AG04450 (cell line): ENCODE measurements at regions of chr2 and their contacts with region 1.

Region 1: GRCh38 chr2:101387151-101387807 is at the start of gene CREG2:
- DNase-seq: no peak
- H3K4me3 ChIP-seq: peak within 1 kb of the TSS; percentile 65
- H3K27ac ChIP-seq: no peak within 1 kb of the TSS
- H3K27me3 ChIP-seq: peaks cover 25% of the 10 kb centered on the region
- CTCF ChIP-seq: peak; percentile 52
- polyA plus RNA-seq, gene CREG2: not detected in 2 replicates

Region 2: DNA sequence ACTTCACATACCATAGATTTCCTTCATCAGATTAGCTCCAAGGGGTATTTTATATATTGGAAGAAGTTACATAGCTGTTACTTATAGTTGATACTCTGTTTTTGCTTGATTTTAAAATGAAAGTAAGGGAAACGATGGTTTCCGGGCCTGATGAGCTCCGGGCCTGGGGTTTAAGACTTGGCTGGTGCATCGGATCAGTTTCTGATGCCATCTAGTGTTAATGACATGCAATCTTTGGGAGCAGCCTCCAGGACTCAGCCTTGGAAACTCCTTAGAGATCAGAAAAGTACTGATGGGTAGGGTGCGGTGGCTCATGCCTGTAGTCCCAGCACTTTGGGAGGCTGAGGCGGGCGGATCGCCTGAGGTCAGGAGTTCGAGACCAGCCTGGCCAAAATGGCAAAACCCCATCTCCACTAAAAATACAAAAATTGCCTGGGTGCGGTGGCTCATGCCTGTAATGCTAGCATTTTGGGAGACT is 181.7 kb before region 1 on chr2:
- CTCF ChIA-PET with region 1: no interaction called
- POLR2A ChIA-PET with region 1: no interaction called
- DNase-seq: peak; percentile 63
- H3K4me3 ChIP-seq: peak overlapping the region; percentile 7; the same call in 1 of the 2 replicates
- H3K27ac ChIP-seq: no peak overlapping the region
- H3K27me3 ChIP-seq: no peaks in the 10 kb centered on the region
- CTCF ChIP-seq: peak; percentile 73

Region 3: GRCh38 chr2:101349893-101350662 is 37.2 kb before region 1 on chr2:
- CTCF ChIA-PET with region 1: interaction called, 28 read pairs
- POLR2A ChIA-PET with region 1: no interaction called
- DNase-seq: peak; percentile 11
- H3K4me3 ChIP-seq: no peak overlapping the region
- H3K27ac ChIP-seq: no peak overlapping the region
- H3K27me3 ChIP-seq: no peaks in the 10 kb centered on the region
- CTCF ChIP-seq: peak; percentile 66

Region 4: DNA sequence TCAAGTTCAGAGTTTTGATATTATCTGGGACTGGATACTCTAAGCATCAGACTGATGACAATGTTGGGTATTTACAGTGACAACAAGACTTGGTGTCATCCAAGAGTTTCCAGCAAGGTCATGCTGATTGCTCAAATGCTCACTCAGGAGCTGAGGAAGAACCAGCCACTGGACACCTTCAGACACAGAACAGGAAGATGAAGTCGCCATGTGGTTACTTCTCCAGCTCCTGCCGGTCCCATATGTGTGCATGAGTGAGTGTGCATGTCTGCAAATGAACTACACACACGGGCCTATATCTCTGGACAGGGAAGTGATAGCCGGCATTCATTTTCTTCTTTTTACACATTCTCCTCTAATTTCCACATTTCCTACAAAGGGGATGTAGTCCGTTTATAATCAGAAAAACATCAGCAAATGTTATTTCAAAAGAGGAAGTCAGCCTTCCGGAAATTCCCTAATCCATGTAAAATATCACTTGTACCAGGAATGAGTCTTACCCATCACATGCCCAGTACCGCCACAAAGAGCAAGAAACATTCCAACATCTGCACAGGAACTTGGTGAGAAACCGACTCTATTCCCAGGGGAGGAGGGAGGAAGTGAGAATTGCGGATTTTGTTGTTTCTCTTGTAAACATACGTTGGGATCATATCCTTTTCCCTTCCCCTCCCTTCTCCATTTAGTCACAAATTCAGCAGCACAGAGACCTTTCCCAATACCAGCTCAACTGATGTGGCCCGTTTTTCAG is 76.8 kb after region 1 on chr2:
- CTCF ChIA-PET with region 1: no interaction called
- POLR2A ChIA-PET with region 1: no interaction called
- DNase-seq: peak; percentile 50
- H3K4me3 ChIP-seq: no peak overlapping the region
- H3K27ac ChIP-seq: peak overlapping the region; percentile 77
- H3K27me3 ChIP-seq: no peaks in the 10 kb centered on the region
- CTCF ChIP-seq: no peak